ENCODE measurements at regions of chr14 and their contacts with region 1.

Region 1: GRCh38 chr14:31207755-31208545 is at the start of gene HECTD1:
- DNase-seq: peak; percentile 76 to 96 (median 87)
- ATAC-seq: peak; percentile 69
- H3K4me3 ChIP-seq: peak within 1 kb of the TSS; percentile 77
- H3K4me3 Mint-ChIP-seq: peak within 1 kb of the TSS; percentile 93
- H3K27ac ChIP-seq: peak within 1 kb of the TSS; percentile 93 to 95
- H3K27ac Mint-ChIP-seq: peak within 1 kb of the TSS; percentile 97
- H3K4me1 ChIP-seq: peaks cover 40% of the 10 kb centered on the region
- H3K4me1 Mint-ChIP-seq: peaks cover 67% of the 10 kb centered on the region
- H3K27me3 ChIP-seq: no peaks in the 10 kb centered on the region
- H3K27me3 Mint-ChIP-seq: no peaks in the 10 kb centered on the region
- CTCF ChIP-seq: peak; percentile 74
- total RNA-seq, gene HECTD1: 162 to 168 TPM

Region 2: DNA sequence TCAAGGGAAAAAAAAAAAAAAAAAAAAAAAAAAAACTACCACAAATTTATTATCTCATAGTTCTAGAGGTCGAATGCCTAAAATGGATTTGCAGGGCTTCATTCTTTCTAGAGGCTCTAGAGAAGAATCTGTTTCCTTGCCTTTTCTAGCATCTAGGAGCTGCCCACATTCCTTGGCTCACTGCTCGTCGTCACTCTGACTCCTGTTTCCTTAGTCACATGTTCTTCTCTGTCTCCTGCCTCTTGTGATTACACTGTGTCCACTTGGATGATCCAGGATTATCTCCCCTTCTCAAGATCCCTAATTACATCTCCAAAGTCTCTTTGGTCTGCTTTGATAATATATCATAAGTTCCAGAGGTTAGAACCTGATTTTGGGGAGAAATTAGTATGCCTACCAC is 89.1 kb before region 1 on chr14:
- CTCF ChIA-PET with region 1: interaction called, 5 read pairs
- POLR2A ChIA-PET with region 1: interaction called, 20 read pairs
- intact Hi-C with region 1: loop called in 1 of 2 experiments (anchors 10 kb)
- DNase-seq: no peak
- ATAC-seq: no peak
- H3K4me3 ChIP-seq: no peak overlapping the region
- H3K4me3 Mint-ChIP-seq: no peak overlapping the region
- H3K27ac ChIP-seq: no peak overlapping the region
- H3K27ac Mint-ChIP-seq: no peak overlapping the region
- H3K4me1 ChIP-seq: no peaks in the 10 kb centered on the region
- H3K4me1 Mint-ChIP-seq: peaks cover 14% of the 10 kb centered on the region
- H3K27me3 ChIP-seq: no peaks in the 10 kb centered on the region
- H3K27me3 Mint-ChIP-seq: no peaks in the 10 kb centered on the region
- CTCF ChIP-seq: no peak

Region 3: GRCh38 chr14:31243860-31244259 is 35.9 kb after region 1 on chr14:
- CTCF ChIA-PET with region 1: no interaction called
- POLR2A ChIA-PET with region 1: no interaction called
- intact Hi-C with region 1: no loop called
- DNase-seq: no peak
- ATAC-seq: no peak
- H3K4me3 ChIP-seq: no peak overlapping the region
- H3K4me3 Mint-ChIP-seq: no peak overlapping the region
- H3K27ac ChIP-seq: no peak overlapping the region
- H3K27ac Mint-ChIP-seq: no peak overlapping the region
- H3K4me1 ChIP-seq: peaks cover 10% of the 10 kb centered on the region
- H3K4me1 Mint-ChIP-seq: peaks cover 4% of the 10 kb centered on the region
- H3K27me3 ChIP-seq: no peaks in the 10 kb centered on the region
- H3K27me3 Mint-ChIP-seq: no peaks in the 10 kb centered on the region
- CTCF ChIP-seq: no peak

Region 4: GRCh38 chr14:31270196-31270772 is 62.3 kb after region 1 on chr14:
- CTCF ChIA-PET with region 1: no interaction called
- POLR2A ChIA-PET with region 1: interaction called, 13 read pairs
- intact Hi-C with region 1: no loop called
- DNase-seq: peak in 1 of 14 experiments; percentile 26
- ATAC-seq: no peak
- H3K4me3 ChIP-seq: no peak overlapping the region
- H3K4me3 Mint-ChIP-seq: no peak overlapping the region
- H3K27ac ChIP-seq: no peak overlapping the region
- H3K27ac Mint-ChIP-seq: no peak overlapping the region
- H3K4me1 ChIP-seq: peaks cover 8% of the 10 kb centered on the region
- H3K4me1 Mint-ChIP-seq: no peaks in the 10 kb centered on the region
- H3K27me3 ChIP-seq: no peaks in the 10 kb centered on the region
- H3K27me3 Mint-ChIP-seq: no peaks in the 10 kb centered on the region
- CTCF ChIP-seq: no peak

Region 5: GRCh38 chr14:31360919-31361662 is 153.1 kb after region 1 on chr14:
- CTCF ChIA-PET with region 1: no interaction called
- POLR2A ChIA-PET with region 1: interaction called, 3 read pairs
- intact Hi-C with region 1: loop called in 1 of 2 experiments (anchors 2 kb)
- DNase-seq: no peak
- ATAC-seq: no peak
- H3K4me3 ChIP-seq: no peak overlapping the region
- H3K4me3 Mint-ChIP-seq: no peak overlapping the region
- H3K27ac ChIP-seq: no peak overlapping the region
- H3K27ac Mint-ChIP-seq: no peak overlapping the region
- H3K4me1 ChIP-seq: no peaks in the 10 kb centered on the region
- H3K4me1 Mint-ChIP-seq: peaks cover under 1% of the 10 kb centered on the region
- H3K27me3 ChIP-seq: no peaks in the 10 kb centered on the region
- H3K27me3 Mint-ChIP-seq: no peaks in the 10 kb centered on the region
- CTCF ChIP-seq: no peak

Region 6: DNA sequence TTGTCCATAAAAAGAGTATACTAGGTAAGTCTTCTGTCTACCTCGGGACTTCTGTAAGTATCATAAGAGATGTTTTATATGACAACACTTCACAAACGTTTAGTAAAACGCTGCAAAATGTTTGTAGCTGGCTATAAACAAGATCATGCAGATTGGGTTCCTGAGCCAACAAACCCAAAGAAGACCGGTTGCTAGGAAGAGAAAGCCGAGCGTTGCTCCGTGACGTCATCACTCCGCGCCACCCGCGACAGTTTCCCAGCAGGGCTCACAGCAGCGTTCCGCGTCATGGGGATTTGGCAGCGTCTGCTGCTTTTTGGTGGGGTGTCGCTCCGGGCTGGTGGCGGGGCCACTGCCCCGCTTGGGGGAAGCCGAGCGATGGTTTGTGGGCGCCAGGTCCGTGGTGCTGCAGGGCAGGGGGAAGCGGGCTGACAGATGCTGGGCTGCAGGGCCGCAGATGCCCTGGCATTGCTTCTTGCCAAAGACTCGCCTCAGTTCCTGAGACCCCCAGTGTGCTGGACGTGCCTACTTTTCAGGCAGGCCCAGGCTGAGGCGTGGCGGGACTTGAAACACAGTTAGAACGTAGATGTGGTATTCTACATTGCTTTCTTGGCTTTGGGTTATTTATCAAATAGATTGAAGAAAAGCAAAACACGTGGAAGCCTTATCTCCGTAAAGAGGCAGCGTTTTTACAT is 353.4 kb after region 1 on chr14 and contains the start of gene NUBPL:
- CTCF ChIA-PET with region 1: no interaction called
- POLR2A ChIA-PET with region 1: interaction called, 3 read pairs
- intact Hi-C with region 1: loop called in 1 of 2 experiments (anchors 5 kb)
- DNase-seq: peak; percentile 94 to 99 (median 97)
- ATAC-seq: peak; percentile 91
- H3K4me3 ChIP-seq: peak within 1 kb of the TSS; percentile 84
- H3K4me3 Mint-ChIP-seq: peak within 1 kb of the TSS; percentile 95
- H3K27ac ChIP-seq: peak within 1 kb of the TSS; percentile 80 to 84
- H3K27ac Mint-ChIP-seq: peak within 1 kb of the TSS; percentile 98
- H3K4me1 ChIP-seq: no peaks in the 10 kb centered on the region
- H3K4me1 Mint-ChIP-seq: peaks cover 34% of the 10 kb centered on the region
- H3K27me3 ChIP-seq: no peaks in the 10 kb centered on the region
- H3K27me3 Mint-ChIP-seq: peaks cover 26% of the 10 kb centered on the region
- CTCF ChIP-seq: no peak
- total RNA-seq, gene NUBPL: 7.2 to 8.2 TPM

Region 7: DNA sequence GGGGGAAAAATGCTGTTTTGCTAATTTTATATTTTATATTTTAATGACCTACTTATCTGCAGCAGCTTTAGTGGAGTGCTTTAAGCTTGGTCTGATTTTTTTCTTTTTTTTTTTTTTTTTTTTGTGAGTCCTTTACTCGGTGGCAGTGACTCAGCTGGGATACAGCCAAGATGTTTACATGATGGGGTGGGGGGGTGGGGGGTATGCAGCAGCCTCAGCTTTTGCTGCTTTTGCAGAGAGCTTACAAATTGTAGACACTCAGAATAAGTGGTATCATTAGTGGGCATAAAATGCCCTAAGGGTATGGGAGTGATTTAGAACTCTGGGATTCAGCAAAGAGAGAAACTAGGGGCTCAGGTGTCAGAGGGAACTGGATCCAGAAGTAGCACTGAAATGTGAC is 830.9 kb after region 1 on chr14:
- CTCF ChIA-PET with region 1: no interaction called
- POLR2A ChIA-PET with region 1: no interaction called
- intact Hi-C with region 1: no loop called
- DNase-seq: no peak
- ATAC-seq: no peak
- H3K4me3 ChIP-seq: no peak overlapping the region
- H3K4me3 Mint-ChIP-seq: no peak overlapping the region
- H3K27ac ChIP-seq: no peak overlapping the region
- H3K27ac Mint-ChIP-seq: no peak overlapping the region
- H3K4me1 ChIP-seq: no peaks in the 10 kb centered on the region
- H3K4me1 Mint-ChIP-seq: no peaks in the 10 kb centered on the region
- H3K27me3 ChIP-seq: no peaks in the 10 kb centered on the region
- H3K27me3 Mint-ChIP-seq: peaks cover 21% of the 10 kb centered on the region
- CTCF ChIP-seq: no peak